K562 (cell line): ENCODE measurements at regions of chr15 and their contacts with region 1.

Region 1: GRCh38 chr15:56739964-56740640 is 6.8 kb upstream of the ZNF280D start:
- DNase-seq: peak in 2 of 4 experiments; percentile 35 to 52
- ATAC-seq: peak; percentile 62
- H3K4me3 ChIP-seq: no peak overlapping the region
- H3K27ac ChIP-seq: no peak overlapping the region
- H3K4me1 ChIP-seq: peaks cover 3 to 40% of the 10 kb centered on the region in 2 experiments; a peak in 3 of 5 replicates
- H3K27me3 ChIP-seq: no peaks in the 10 kb centered on the region
- CTCF ChIP-seq: peak; percentile 48 to 65 (median 54)
- EP300 ChIP-seq: no peak
- POLR2A ChIP-seq: no peak
- RAD21 ChIP-seq: peak in 1 of 2 experiments; percentile 48; a peak in 2 of 4 replicates

Region 2: DNA sequence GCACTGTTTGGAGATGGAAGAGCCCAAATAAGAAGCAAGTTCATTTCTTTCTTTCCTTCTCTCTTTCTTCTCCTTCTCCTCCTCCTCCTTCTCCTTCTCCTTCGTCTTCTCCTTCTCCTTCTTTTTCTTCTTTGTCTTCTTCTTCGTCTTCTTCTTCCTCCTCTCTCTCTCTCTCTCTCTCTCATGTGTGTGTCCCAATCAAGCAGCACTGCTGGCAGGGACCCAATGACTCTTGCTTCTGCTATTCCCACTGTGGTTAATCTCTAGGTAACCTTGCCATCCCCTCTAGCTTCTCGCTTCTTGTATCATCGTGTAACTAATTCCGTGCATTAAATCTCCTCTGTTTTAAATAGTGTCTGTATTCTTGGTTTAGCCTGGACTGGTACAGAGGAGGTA is 19.3 kb after region 1 on chr15:
- CTCF ChIA-PET with region 1: no interaction called
- POLR2A ChIA-PET with region 1: interaction called, 15 read pairs
- in situ Hi-C with region 1: no loop called
- intact Hi-C with region 1: no loop called
- DNase-seq: no peak
- ATAC-seq: no peak
- H3K4me3 ChIP-seq: no peak overlapping the region
- H3K27ac ChIP-seq: no peak overlapping the region
- H3K4me1 ChIP-seq: peaks cover 0 to 16% of the 10 kb centered on the region in 2 experiments; a peak in 3 of 5 replicates
- H3K27me3 ChIP-seq: no peaks in the 10 kb centered on the region
- CTCF ChIP-seq: no peak
- EP300 ChIP-seq: no peak
- POLR2A ChIP-seq: no peak
- RAD21 ChIP-seq: no peak

Region 3: GRCh38 chr15:56804938-56805337 is 64.8 kb after region 1 on chr15:
- CTCF ChIA-PET with region 1: no interaction called
- POLR2A ChIA-PET with region 1: no interaction called
- in situ Hi-C with region 1: no loop called
- intact Hi-C with region 1: loop called (anchors 5 kb)
- DNase-seq: no peak
- ATAC-seq: no peak
- H3K4me3 ChIP-seq: no peak overlapping the region
- H3K27ac ChIP-seq: no peak overlapping the region
- H3K4me1 ChIP-seq: no peaks in the 10 kb centered on the region; a peak in 1 of 5 replicates
- H3K27me3 ChIP-seq: no peaks in the 10 kb centered on the region
- CTCF ChIP-seq: no peak
- EP300 ChIP-seq: no peak
- POLR2A ChIP-seq: no peak
- RAD21 ChIP-seq: no peak

Region 4: GRCh38 chr15:56892659-56893356 is 152.7 kb after region 1 on chr15:
- CTCF ChIA-PET with region 1: no interaction called
- POLR2A ChIA-PET with region 1: no interaction called
- in situ Hi-C with region 1: no loop called
- intact Hi-C with region 1: no loop called
- DNase-seq: no peak
- ATAC-seq: no peak
- H3K4me3 ChIP-seq: no peak overlapping the region
- H3K27ac ChIP-seq: no peak overlapping the region
- H3K4me1 ChIP-seq: peaks cover 0 to 14% of the 10 kb centered on the region in 2 experiments; a peak in 4 of 5 replicates
- H3K27me3 ChIP-seq: no peaks in the 10 kb centered on the region
- CTCF ChIP-seq: no peak
- EP300 ChIP-seq: no peak
- POLR2A ChIP-seq: no peak
- RAD21 ChIP-seq: no peak